ENCODE measurements at regions of chr4 and their contacts with region 1.

Region 1: GRCh38 chr4:35725131-35725530 is 519.2 kb downstream of the ARAP2 start:
- DNase-seq: no peak
- ATAC-seq: no peak
- H3K4me3 Mint-ChIP-seq: no peak overlapping the region
- H3K27ac Mint-ChIP-seq: no peak overlapping the region
- H3K4me1 Mint-ChIP-seq: no peaks in the 10 kb centered on the region
- H3K27me3 Mint-ChIP-seq: no peaks in the 10 kb centered on the region

Region 2: DNA sequence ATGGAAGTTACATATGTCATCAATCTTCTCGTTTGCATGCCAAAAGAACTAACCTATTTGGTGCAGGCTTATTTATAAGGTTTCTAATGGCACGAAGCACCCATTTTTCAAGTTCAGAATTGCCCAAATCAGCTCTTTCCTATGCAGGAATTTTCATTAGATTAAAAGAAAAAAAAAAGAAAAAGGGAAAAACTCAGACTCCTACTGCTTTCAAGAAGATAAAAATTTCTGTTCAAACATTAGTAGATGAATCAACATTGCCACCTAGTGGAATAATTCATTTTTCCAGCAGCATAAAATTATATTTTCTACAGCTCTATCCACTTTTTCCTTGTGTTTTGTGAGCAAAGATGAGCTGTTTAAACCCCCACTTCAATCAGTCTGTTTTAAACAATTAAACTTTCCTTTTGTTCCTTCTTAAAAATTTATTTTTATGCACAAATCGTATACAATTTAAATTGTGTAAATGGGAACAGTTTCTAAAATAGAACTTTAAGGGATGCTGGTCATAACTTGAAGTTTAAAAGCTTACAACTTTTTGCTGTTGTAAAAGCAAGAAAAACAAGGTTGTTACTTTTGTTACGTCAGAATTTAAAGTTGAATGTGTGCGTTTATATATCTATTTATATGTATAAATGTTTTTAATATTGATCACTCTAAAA is 209.3 kb after region 1 on chr4:
- CTCF ChIA-PET with region 1: interaction called, 3 read pairs
- POLR2A ChIA-PET with region 1: no interaction called
- intact Hi-C with region 1: loop called in 1 of 2 experiments (anchors 2 kb)
- DNase-seq: no peak
- ATAC-seq: no peak
- H3K4me3 Mint-ChIP-seq: no peak overlapping the region
- H3K27ac Mint-ChIP-seq: no peak overlapping the region
- H3K4me1 Mint-ChIP-seq: no peaks in the 10 kb centered on the region
- H3K27me3 Mint-ChIP-seq: peaks cover 7% of the 10 kb centered on the region